Activated B cell treated with CpG ODN at 0.5 μM for 24 hours (primary cell): ENCODE measurements at regions of chr19 and their contacts with region 1.

Region 1: DNA sequence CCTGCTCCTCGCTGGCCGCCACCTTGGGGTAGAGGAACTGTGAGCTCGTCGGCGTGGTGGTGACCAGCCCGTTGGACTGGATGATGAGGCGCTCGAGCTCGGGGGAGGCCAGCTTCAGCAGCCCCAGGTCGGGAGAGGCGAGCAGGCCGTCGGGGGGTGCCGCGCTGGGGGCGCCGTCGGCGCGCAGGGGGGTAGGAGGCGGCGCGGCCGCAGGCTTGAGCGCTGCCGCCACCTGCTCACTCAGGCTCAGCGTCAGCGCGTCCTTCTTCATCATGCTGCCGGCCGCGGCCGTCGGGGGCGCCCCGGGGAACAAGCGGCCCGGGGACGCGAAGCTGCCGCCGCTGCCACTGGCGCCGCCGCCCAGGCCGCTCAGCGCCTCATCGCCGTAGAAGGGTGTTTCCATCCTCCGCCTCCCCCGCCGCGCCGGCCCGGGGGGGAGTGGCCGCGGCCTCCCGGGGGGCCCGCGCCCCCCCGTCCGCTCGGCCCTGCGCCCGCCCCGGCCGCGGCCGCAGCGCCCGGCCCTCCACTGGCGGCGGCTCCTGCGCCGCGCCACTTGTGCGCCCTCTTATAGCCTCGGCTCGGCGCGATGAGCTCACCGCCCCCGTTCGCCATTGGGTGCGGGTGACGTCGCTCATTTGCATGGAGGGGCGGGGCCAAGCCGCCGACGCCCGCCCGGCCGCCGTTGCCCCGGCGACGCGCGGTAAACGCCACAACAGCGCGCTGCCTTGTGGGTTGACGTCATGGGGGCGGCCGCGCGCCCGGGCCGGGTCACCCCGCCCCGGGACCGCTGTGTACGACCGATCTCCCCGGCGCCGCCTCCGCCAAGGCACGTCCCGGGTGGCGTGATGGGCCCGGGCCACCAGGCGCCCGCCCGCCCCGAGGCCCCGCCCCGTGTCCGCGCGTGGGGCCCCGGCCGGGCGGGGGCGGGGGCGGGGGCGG is at the start of gene JUND:
- DNase-seq: peak; percentile 99
- ATAC-seq: peak; percentile 63
- H3K4me3 Mint-ChIP-seq: peak within 1 kb of the TSS; percentile 96
- H3K27ac Mint-ChIP-seq: peak within 1 kb of the TSS; percentile 97
- H3K4me1 Mint-ChIP-seq: peaks cover 48% of the 10 kb centered on the region
- H3K27me3 Mint-ChIP-seq: no peaks in the 10 kb centered on the region
- CTCF ChIP-seq: no peak
- total RNA-seq, gene JUND: 206 and 225 TPM in 2 replicates

Region 2: DNA sequence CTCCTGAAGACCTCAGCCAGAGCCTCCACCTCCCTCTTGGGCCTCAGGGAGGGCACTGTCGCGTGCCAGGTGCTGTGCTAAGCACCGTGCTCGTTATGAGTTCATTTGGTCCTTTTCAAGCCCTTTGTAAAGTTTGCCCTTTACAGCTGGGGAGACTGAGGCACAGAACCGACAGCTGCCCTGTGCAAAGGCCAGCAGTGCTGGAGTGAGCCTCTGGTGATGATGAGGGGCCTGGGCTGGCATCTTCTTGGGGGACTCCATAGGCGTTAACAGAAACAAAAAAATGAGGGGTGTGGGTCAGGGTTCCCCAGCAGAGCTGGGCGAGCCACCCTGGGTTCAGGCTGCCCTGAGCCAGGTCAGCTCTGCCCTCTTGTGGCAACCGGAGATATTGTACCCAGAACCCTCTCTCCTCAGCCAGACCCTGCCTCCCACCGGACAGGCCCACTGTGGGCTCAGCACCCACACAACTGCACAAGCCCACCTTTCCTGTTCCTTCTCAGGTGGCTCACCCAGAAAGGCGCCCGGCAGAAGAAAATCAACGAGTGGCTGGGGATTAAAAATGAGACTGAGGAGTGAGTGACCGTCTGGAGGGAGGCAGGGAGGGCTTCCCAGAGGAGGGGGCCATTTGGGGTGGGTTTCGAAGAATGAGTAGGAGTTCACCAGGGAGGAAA is 113.2 kb before region 1 on chr19:
- CTCF ChIA-PET with region 1: no interaction called
- POLR2A ChIA-PET with region 1: interaction called, 28 read pairs
- intact Hi-C with region 1: loop called (anchors 1 kb)
- DNase-seq: peak; percentile 52
- ATAC-seq: peak; percentile 34
- H3K4me3 Mint-ChIP-seq: peak overlapping the region; percentile 66
- H3K27ac Mint-ChIP-seq: peak overlapping the region; percentile 82
- H3K4me1 Mint-ChIP-seq: peaks cover 53% of the 10 kb centered on the region
- H3K27me3 Mint-ChIP-seq: no peaks in the 10 kb centered on the region
- CTCF ChIP-seq: peak; percentile 44

Region 3: DNA sequence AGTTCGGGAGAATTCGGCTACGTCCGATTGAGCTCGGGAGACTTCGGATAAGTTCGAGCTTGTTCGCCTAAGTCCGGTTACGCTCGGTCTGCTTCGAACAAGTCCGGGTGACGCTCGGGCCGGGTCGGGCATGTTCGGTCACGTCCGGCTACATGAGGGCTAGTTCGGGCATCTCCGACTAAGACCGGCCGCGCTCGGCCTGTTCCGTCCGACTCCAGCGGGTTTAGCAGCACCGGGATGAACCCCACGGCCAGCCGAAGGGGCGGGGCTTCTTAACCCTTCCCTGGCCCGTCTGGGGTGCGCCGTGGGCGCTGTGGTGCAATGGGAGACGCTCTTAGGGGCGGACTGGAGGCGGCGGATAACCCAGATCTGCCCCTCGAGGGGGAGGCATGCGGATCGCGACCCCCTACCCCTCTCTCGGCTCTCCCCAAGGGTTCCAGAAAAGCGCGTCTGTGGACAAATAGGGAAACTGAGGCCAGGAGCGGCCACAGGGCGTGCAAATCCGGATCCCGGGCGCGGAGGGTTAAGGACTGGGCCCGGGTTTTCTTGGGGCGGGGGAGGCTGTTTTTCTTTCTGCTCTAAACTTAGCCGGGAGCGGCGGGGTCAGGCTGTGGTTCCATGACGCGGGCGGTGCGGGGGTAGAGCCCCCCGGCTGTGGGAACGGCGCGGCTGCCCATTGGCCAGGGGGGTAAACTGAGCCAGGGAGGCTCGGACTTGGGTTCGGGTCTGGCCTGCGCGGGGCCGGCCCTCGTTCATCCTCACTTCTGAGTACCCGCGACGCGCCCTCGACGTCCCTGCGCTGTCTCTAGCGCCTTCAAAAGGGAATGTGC is 56.6 kb before region 1 on chr19:
- CTCF ChIA-PET with region 1: no interaction called
- POLR2A ChIA-PET with region 1: interaction called, 14 read pairs
- intact Hi-C with region 1: no loop called
- DNase-seq: peak; percentile 77
- ATAC-seq: peak; percentile 98
- H3K4me3 Mint-ChIP-seq: peak overlapping the region; percentile 84
- H3K27ac Mint-ChIP-seq: peak overlapping the region; percentile 35
- H3K4me1 Mint-ChIP-seq: peaks cover 45% of the 10 kb centered on the region
- H3K27me3 Mint-ChIP-seq: peaks cover 55% of the 10 kb centered on the region
- CTCF ChIP-seq: no peak

Region 4: GRCh38 chr19:18297308-18297707 is 16.0 kb after region 1 on chr19:
- CTCF ChIA-PET with region 1: interaction called, 100 read pairs
- POLR2A ChIA-PET with region 1: interaction called, 926 read pairs
- intact Hi-C with region 1: loop called (anchors 2 kb)
- DNase-seq: no peak
- ATAC-seq: no peak
- H3K4me3 Mint-ChIP-seq: no peak overlapping the region
- H3K27ac Mint-ChIP-seq: no peak overlapping the region
- H3K4me1 Mint-ChIP-seq: peaks cover 33% of the 10 kb centered on the region
- H3K27me3 Mint-ChIP-seq: no peaks in the 10 kb centered on the region
- CTCF ChIP-seq: no peak

Region 5: GRCh38 chr19:18340190-18340989 is 59.0 kb after region 1 on chr19 and contains the start of gene PGPEP1:
- CTCF ChIA-PET with region 1: interaction called, 15 read pairs
- POLR2A ChIA-PET with region 1: interaction called, 12 read pairs
- intact Hi-C with region 1: no loop called
- DNase-seq: peak; percentile 70
- ATAC-seq: peak; percentile 72
- H3K4me3 Mint-ChIP-seq: peak within 1 kb of the TSS; percentile 80
- H3K27ac Mint-ChIP-seq: peak within 1 kb of the TSS; percentile 3
- H3K4me1 Mint-ChIP-seq: peaks cover 13% of the 10 kb centered on the region
- H3K27me3 Mint-ChIP-seq: peaks cover 6% of the 10 kb centered on the region
- CTCF ChIP-seq: no peak
- total RNA-seq, gene PGPEP1: 5.6 and 6.9 TPM in 2 replicates

Region 6: DNA sequence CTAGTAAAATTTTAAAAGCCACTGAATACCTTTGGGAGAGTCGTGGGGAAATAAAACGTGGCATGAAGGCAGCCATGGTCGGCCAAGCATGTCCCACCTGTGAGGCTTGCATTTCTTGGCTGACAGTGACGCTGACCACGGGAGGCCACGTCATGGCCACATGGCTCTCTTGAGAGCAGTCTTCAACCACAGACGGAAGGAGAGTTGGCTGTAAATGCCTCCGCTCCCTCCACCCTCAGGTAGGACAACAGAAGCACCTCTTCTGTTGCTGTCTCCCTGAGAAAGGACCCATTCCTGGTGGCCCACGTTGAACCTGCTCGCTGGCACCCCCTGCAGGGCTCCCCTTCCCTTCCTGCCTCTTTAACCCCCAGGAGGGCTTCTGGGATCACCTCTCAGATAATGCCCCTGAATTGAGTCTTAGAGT is 126.7 kb after region 1 on chr19:
- CTCF ChIA-PET with region 1: interaction called, 21 read pairs
- POLR2A ChIA-PET with region 1: interaction called, 15 read pairs
- intact Hi-C with region 1: loop called (anchors 1 kb)
- DNase-seq: peak; percentile 81
- ATAC-seq: peak; percentile 88
- H3K4me3 Mint-ChIP-seq: peak overlapping the region; percentile 53
- H3K27ac Mint-ChIP-seq: peak overlapping the region; percentile 76
- H3K4me1 Mint-ChIP-seq: peaks cover 24% of the 10 kb centered on the region
- H3K27me3 Mint-ChIP-seq: peaks cover 18% of the 10 kb centered on the region
- CTCF ChIP-seq: no peak

Region 7: DNA sequence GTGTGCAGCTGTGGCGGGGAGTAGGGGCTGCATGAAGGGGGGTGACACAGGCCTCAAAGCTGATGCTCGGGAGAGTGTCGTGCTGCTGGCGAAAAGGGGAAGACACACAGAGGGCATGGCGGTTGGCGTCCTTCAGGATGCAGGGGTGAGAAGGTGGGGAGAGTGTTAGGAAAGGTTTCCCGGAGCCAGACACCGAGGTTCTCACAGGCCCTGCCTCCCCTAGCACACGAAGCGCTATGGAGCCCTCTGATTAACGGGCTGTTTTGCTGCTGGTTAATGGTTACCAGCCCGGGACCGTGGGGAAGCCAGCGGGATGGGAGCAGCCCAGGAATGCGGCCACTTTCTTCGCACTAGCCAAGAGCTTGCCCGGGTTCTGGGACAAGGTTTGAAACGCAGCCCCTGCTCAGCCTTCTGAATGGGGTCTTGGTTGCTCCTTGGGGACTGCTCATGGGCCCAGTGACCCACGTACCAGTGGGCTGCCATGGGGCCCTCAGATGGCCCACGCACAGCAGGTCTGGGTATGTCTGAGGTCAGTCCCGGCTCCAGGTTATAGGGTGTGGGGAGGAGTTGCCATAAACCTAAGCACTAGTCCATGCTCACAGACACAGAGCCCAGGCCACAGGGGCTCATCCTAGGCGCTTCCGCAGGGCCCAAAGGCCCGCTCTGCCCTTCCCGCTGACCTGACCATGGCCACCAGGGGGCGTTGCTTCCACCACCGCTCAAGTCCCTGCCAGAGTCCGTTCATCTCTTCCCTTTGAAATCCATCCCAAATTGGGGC is 187.9 kb after region 1 on chr19:
- CTCF ChIA-PET with region 1: no interaction called
- POLR2A ChIA-PET with region 1: no interaction called
- intact Hi-C with region 1: no loop called
- DNase-seq: peak; percentile 44
- ATAC-seq: peak; percentile 48
- H3K4me3 Mint-ChIP-seq: no peak overlapping the region
- H3K27ac Mint-ChIP-seq: no peak overlapping the region
- H3K4me1 Mint-ChIP-seq: peaks cover 5% of the 10 kb centered on the region
- H3K27me3 Mint-ChIP-seq: no peaks in the 10 kb centered on the region
- CTCF ChIP-seq: no peak